CD14-positive monocyte (primary cell): ENCODE measurements at regions of chr7 and their contacts with region 1.

Region 1: DNA sequence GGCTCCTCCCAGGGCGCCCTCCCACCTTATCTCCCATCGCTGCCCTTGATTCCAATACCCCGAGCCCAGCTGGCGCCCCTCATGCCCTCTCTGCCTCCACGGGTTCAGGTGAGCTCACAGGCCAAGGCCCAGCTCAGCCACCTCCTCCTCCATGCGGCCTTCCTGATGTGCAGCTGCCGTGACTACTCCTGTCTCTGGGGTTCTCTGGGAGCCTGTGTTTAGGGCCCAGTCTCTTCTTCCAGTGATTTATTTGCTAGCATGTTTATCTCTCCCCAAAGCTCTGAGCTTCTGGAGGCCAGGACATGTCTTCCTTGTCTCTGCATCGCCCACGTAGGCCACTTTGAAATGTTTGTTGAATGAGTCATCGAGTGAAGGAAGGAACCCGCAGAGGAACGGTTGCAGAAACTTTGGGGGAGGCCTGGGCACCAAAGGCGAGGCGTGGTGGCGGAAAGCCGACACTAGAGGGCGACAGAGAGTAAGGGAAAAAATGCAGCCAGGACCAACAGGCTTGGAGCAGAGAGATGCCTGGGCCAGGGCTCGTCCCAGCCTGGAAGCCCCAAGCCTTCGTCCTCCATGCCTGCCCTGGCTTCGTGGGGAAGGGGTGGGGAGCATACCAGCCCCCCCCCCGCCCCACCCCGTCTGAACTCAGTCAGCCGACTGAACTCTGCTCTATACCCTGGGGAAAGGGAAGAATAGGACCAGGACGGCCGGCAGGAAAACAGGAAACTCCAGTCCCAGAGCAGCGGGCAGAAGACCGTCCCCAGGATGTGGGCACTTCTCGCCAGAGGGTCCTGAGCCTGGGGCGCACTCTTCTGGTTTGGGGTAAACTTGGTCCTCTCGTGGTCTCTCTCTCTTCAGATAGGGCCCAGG is 10.9 kb upstream of the HSPB1 start:
- DNase-seq: peak; percentile 82 to 88 (median 84)
- H3K4me3 ChIP-seq: peak overlapping the region; percentile 4 to 73 (median 33)
- H3K4me3 Mint-ChIP-seq: peak overlapping the region; percentile 70 to 78
- H3K27ac ChIP-seq: no peak overlapping the region
- H3K27ac Mint-ChIP-seq: peak overlapping the region in 6 of 7 donors; percentile 3 to 70 (median 46)
- H3K4me1 ChIP-seq: peaks cover 25 to 40% of the 10 kb centered on the region in 2 donors
- H3K4me1 Mint-ChIP-seq: peaks cover 38% of the 10 kb centered on the region
- H3K27me3 ChIP-seq: no peaks in the 10 kb centered on the region
- H3K27me3 Mint-ChIP-seq: peaks cover 7 to 20% (median 7%) of the 10 kb centered on the region in 3 donors
- CTCF ChIP-seq: peak; percentile 95

Region 2: DNA sequence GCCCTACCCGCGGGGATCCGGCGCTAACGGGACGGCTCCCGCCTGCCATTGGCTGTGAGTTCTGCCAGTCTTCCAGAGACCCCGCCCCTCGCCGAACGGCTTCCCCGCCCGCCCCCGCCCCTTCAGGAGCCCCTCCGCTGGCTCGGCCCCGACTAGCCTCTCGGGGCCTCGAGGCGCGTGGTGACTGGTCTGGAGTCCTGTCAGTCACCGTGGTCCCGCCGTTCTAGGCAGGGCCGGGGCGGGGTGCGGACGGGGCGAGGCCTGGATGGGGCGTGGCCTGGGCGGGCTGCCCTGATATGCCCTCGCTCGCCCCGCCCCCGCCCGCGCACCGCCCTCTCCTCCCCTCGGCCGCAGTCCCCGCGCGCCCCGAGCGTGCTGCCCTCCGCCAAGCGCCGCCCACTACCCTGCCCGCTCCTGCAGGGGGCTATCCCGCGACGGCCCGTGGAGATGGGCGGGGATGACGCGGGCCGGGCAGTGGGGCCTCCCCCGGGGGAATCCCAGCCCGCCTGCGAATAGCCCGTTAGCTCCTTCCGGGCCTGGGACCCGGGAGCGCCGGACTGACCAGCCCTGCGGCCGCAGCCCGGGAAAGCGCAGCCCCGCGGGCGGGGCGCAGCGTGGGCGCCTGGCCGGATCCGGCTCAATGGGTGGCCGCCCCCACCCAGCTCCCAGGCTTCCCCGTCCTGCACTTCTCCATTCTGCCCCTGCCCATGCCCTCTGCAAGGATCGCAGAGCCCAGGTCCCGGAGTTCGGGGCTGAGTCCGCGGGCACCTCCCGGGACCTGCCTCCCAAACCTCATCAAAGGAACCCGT is 552.4 kb before region 1 on chr7:
- intact Hi-C with region 1: no loop called
- DNase-seq: peak; percentile 99
- H3K4me3 ChIP-seq: peak overlapping the region; percentile 80 to 95 (median 92)
- H3K4me3 Mint-ChIP-seq: peak overlapping the region; percentile 95 to 96
- H3K27ac ChIP-seq: peak overlapping the region; percentile 90 to 93
- H3K27ac Mint-ChIP-seq: peak overlapping the region; percentile 86 to 99 (median 98)
- H3K4me1 ChIP-seq: peaks cover 36 to 40% of the 10 kb centered on the region in 2 donors
- H3K4me1 Mint-ChIP-seq: peaks cover 34% of the 10 kb centered on the region
- H3K27me3 ChIP-seq: no peaks in the 10 kb centered on the region
- H3K27me3 Mint-ChIP-seq: peaks cover 1 to 8% (median 8%) of the 10 kb centered on the region in 3 donors
- CTCF ChIP-seq: no peak

Region 3: DNA sequence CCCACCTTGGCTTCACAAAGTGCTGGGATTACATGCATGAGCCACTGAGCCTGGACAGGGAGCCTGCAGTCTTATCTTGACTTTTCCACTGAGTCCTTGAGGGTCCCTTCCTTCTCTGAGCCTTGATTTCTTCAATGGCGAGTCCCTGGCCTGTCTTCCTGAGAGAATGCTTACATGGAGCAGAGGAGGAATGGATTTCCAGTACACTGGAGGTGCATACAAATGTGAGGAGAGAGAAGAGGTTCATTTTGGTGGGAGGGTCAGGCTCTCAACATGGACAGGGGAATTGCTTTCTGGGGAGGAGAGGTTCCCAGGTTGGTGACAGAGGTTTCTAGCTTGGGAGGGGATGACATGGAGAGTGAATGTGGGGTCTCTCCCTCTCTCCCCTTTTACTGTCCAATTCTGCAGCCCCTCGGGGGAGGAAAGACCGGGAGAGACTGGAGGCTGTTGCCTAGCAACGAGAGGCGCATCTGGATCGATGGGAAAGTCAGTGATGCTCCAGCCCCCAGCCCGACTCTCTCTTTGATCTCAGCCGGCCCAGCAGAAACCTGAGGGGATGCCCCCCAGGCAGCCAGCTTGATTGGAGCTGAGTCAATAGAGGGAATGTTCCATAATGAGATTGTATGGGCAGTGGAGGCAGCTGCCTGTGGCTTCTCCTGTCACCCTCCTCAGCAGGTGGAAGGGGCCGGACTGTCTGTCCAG is 75.0 kb before region 1 on chr7:
- intact Hi-C with region 1: no loop called
- DNase-seq: no peak
- H3K4me3 ChIP-seq: no peak overlapping the region
- H3K4me3 Mint-ChIP-seq: no peak overlapping the region
- H3K27ac ChIP-seq: no peak overlapping the region
- H3K27ac Mint-ChIP-seq: no peak overlapping the region
- H3K4me1 ChIP-seq: no peaks in the 10 kb centered on the region
- H3K4me1 Mint-ChIP-seq: no peaks in the 10 kb centered on the region
- H3K27me3 ChIP-seq: peaks cover 0 to 5% of the 10 kb centered on the region in 2 donors
- H3K27me3 Mint-ChIP-seq: peaks cover 22 to 44% (median 28%) of the 10 kb centered on the region in 3 donors
- CTCF ChIP-seq: no peak

Region 4: GRCh38 chr7:76307446-76308003 is 15.9 kb after region 1 on chr7:
- intact Hi-C with region 1: loop called in 1 of 2 experiments (anchors 2 kb)
- DNase-seq: no peak
- H3K4me3 ChIP-seq: no peak overlapping the region
- H3K4me3 Mint-ChIP-seq: no peak overlapping the region
- H3K27ac ChIP-seq: no peak overlapping the region
- H3K27ac Mint-ChIP-seq: peak overlapping the region in 1 of 7 donors; percentile 38
- H3K4me1 ChIP-seq: peaks cover 14 to 17% of the 10 kb centered on the region in 2 donors
- H3K4me1 Mint-ChIP-seq: peaks cover 10% of the 10 kb centered on the region
- H3K27me3 ChIP-seq: peaks cover 0 to 2% of the 10 kb centered on the region in 2 donors
- H3K27me3 Mint-ChIP-seq: peaks cover 0 to 8% (median 3%) of the 10 kb centered on the region in 3 donors
- CTCF ChIP-seq: no peak